WTC11 (cell line): ENCODE measurements at regions of chr9 and their contacts with region 1.

Region 1: DNA sequence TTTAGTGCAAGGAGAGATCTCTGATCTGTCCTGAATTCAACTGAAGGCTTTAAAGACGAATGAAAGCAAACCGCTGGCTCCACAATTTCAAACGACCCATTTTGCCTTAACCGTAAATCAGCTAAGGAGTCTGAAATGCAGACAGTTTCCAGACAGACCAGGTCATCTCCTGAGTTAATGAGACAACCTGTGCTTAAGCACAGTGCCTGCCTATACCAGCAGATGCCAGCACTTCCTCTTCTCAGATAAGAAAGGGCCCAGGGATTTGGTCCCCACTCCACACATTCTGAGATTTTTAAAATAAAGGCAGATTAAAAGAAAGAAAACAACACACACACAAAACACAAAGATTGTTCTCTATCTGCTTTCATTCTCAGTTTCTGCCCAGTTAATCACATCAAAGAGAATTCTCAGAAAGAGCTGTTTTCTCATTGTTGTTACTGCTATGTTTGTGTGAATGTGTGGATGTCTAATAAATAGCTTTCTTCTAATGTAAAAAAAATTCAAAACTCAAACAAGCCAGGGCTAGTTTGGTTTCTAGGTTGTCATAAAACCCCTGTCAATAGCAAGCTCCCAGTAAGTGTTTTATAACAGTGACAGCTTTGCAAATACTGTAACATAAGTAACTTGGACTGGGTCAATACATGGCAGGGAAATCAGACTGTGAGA is 157.7 kb upstream of the SLC24A2 start:
- DNase-seq: no peak
- ATAC-seq: peak; percentile 91
- H3K4me3 Mint-ChIP-seq: no peak overlapping the region
- H3K27ac Mint-ChIP-seq: no peak overlapping the region
- H3K4me1 Mint-ChIP-seq: peaks cover 17% of the 10 kb centered on the region
- H3K27me3 Mint-ChIP-seq: no peaks in the 10 kb centered on the region
- CTCF ChIP-seq: no peak

Region 2: DNA sequence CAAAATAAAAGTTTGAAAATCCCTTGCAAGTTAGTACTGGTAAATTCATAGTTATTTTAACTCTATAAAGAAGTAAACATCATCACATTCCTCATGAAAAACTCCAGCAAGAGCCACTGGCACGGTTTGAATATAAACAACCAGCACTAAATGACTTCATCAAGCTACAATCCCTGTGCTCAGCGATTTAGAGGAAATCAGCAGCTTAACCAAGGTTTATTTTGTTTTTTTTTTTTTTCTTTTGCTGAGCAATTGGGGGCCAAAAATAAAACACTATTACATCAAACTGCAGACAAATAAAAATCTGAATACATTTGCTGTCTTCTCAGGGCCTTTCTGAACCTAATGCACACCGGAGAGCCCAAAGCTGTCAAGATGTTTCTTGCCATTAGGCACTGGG is 51.6 kb before region 1 on chr9:
- CTCF ChIA-PET with region 1: no interaction called
- POLR2A ChIA-PET with region 1: no interaction called
- DNase-seq: no peak
- ATAC-seq: no peak
- H3K4me3 Mint-ChIP-seq: no peak overlapping the region
- H3K27ac Mint-ChIP-seq: no peak overlapping the region
- H3K4me1 Mint-ChIP-seq: no peaks in the 10 kb centered on the region
- H3K27me3 Mint-ChIP-seq: no peaks in the 10 kb centered on the region
- CTCF ChIP-seq: no peak

Region 3: DNA sequence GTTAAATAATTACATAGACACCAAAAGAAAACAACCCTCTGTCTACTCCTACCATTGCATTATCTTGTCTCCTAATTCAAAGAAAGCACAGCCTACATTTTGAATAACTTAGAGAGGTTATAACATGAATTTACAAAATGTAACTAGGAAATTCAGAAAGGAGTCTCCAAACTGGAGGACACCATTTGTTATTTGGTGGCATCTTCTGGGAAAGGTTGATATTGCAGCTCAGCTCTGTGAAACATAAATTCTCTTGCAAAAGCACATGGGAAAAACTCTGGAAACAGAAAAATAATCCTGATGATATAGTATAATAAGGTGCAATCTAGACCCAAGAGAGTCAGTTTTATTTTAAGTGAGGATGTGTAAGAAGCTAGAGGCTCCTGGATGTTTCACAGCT is 460.4 kb after region 1 on chr9:
- CTCF ChIA-PET with region 1: interaction called, 11 read pairs
- POLR2A ChIA-PET with region 1: no interaction called
- DNase-seq: no peak
- ATAC-seq: no peak
- H3K4me3 Mint-ChIP-seq: no peak overlapping the region
- H3K27ac Mint-ChIP-seq: no peak overlapping the region
- H3K4me1 Mint-ChIP-seq: peaks cover 19% of the 10 kb centered on the region
- H3K27me3 Mint-ChIP-seq: no peaks in the 10 kb centered on the region
- CTCF ChIP-seq: no peak

Region 4: GRCh38 chr9:20462410-20462809 is 515.8 kb after region 1 on chr9:
- CTCF ChIA-PET with region 1: no interaction called
- POLR2A ChIA-PET with region 1: no interaction called
- DNase-seq: no peak
- ATAC-seq: peak; percentile 76
- H3K4me3 Mint-ChIP-seq: no peak overlapping the region
- H3K27ac Mint-ChIP-seq: no peak overlapping the region
- H3K4me1 Mint-ChIP-seq: no peaks in the 10 kb centered on the region; the same call in 1 of the 2 replicates
- H3K27me3 Mint-ChIP-seq: no peaks in the 10 kb centered on the region
- CTCF ChIP-seq: no peak